H1 (cell line): ENCODE measurements at regions of chr15 and their contacts with region 1.

Region 1: DNA sequence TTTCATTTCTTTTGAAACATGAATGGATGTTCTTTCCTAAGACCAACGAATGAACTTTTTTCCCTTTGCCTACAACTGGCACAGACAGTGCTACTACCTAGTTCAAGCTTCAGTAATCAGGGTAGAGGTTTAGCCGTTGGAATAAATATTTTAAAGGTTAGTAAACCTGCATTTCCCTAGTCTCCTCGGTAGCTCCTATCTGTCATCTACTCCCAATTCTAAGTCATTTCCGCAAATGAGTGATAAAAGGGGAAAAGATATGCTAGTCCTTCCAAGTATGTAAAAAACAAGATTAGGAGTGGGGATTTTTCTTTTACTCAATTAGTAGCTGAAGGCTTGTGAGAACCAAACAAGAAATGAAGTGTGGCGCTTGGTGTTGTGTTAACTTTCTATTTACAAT is 15.2 kb downstream of the SLTM start:
- DNase-seq: no peak
- H3K4me3 ChIP-seq: no peak overlapping the region
- H3K27ac ChIP-seq: no peak overlapping the region
- H3K4me1 ChIP-seq: no peaks in the 10 kb centered on the region
- H3K27me3 ChIP-seq: no peaks in the 10 kb centered on the region
- CTCF ChIP-seq: no peak
- EP300 ChIP-seq: no peak
- POLR2A ChIP-seq: no peak
- RAD21 ChIP-seq: no peak

Region 2: DNA sequence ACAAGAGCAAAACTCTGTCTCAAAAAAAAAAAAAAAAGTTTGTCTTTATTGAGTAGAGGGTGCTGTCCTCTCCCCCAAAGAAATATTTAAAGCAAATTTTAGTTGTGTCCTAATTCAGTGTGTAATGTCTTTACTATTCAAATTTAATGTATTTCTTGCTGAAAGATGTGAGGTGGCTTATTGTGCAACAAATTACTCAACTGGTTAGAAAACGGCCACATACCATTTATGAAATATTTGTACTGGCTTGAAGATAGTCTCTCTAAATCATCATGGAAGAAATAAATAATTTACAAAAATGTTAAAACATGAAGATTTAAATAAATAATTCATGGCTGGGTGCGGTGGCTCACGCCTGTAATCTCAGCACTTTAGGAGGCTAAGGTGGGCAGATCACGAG is 47.8 kb before region 1 on chr15:
- CTCF ChIA-PET with region 1: no interaction called
- POLR2A ChIA-PET with region 1: no interaction called
- DNase-seq: no peak
- H3K4me3 ChIP-seq: no peak overlapping the region
- H3K27ac ChIP-seq: no peak overlapping the region
- H3K4me1 ChIP-seq: peaks cover 0 to 3% (median 1%) of the 10 kb centered on the region in 4 experiments; a peak in 3 of 7 replicates
- H3K27me3 ChIP-seq: peaks cover 0 to 3% (median 0%) of the 10 kb centered on the region in 4 experiments; a peak in 1 of 7 replicates
- CTCF ChIP-seq: no peak
- EP300 ChIP-seq: no peak
- POLR2A ChIP-seq: no peak
- RAD21 ChIP-seq: no peak

Region 3: GRCh38 chr15:58900631-58901030 is 17.6 kb before region 1 on chr15:
- CTCF ChIA-PET with region 1: interaction called, 4 read pairs
- POLR2A ChIA-PET with region 1: interaction called, 12 read pairs
- DNase-seq: no peak
- H3K4me3 ChIP-seq: no peak overlapping the region
- H3K27ac ChIP-seq: no peak overlapping the region
- H3K4me1 ChIP-seq: no peaks in the 10 kb centered on the region
- H3K27me3 ChIP-seq: no peaks in the 10 kb centered on the region
- CTCF ChIP-seq: no peak
- EP300 ChIP-seq: no peak
- POLR2A ChIP-seq: no peak
- RAD21 ChIP-seq: no peak

Region 4: DNA sequence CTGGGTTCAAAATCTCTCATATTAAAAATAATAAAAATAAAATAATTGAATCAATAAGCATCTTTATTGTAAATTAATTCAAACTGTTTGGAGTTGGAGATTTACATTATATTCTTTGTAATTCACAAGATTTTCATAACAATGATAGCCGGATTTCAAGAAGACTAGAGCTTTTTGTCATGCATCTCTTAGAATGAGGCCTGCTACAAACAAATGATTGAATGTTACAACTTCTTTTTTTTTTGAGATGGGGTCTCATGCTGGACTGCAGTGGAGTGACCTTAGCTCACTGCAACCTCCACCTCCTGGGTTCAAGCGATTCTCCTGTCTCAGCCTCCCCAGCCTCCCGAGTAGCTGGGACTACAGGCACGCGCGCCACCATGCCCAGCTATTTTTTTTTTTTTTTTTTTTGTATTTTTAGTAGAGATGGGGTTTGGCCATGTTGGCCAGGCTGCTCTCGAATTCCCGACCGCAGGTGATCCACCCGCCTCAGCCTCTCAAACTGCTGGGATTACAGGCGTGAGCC is 11.7 kb after region 1 on chr15:
- CTCF ChIA-PET with region 1: interaction called, 5 read pairs
- POLR2A ChIA-PET with region 1: interaction called, 33 read pairs
- DNase-seq: no peak
- H3K4me3 ChIP-seq: no peak overlapping the region
- H3K27ac ChIP-seq: no peak overlapping the region
- H3K4me1 ChIP-seq: peaks cover 0 to 23% (median 6%) of the 10 kb centered on the region in 4 experiments; a peak in 6 of 7 replicates
- H3K27me3 ChIP-seq: no peaks in the 10 kb centered on the region
- CTCF ChIP-seq: no peak
- EP300 ChIP-seq: no peak
- POLR2A ChIP-seq: no peak; a peak in 1 of 3 replicates
- RAD21 ChIP-seq: no peak